CD4-positive, alpha-beta T cell (primary cell): ENCODE measurements at regions of chr7 and their contacts with region 1.

Region 1: DNA sequence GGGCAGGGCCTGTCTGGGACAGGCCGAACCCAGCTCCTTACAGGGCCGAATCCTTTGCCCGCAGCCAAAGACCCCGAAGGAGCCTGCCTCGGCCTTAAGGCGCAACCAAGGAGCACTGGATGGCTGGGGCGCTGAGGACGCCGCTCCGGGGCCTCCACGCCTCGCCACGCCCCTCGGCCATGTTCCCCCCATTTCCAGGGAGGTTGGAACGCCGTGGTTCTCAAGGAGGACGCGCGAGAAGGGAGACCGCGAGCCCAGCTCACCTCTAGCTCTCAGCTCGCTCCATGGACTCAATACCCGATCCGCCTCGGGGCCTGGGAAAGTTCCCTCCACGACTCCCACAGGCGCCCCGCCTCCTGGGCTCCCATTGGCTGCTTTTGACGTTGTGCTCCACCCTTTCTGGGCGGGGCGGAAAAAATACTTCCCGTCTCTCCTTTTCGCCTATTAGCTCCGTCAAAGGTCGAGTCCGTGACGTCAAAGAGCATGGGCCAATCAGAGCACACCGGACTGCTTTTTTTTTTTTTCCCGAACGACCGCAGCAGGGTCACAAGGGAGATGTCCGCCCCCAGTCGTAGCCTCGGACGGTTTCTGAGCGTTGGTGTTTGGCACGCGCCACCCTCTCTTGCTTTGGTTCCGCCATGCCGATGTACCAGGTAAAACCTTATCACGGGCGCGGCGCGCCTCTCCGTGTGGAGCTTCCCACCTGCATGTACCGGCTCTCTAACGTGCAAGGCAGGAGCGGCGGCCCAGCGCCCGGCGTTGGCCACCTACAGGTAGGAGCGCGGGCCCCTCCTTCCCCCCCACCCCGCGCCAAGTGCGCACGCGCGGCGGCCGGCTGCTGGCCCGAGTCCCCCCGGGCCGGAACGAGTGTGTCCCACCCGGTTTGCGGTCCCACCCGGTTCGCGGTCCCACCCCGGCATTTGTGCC is 305.7 kb downstream of the TYW1 start:
- DNase-seq: peak; percentile 90 to 99 (median 96)
- ATAC-seq: peak; percentile 82
- H3K4me3 ChIP-seq: peak overlapping the region; percentile 70
- H3K4me3 Mint-ChIP-seq: peak overlapping the region; percentile 96
- H3K27ac ChIP-seq: peak overlapping the region; percentile 68 to 89
- H3K27ac Mint-ChIP-seq: peak overlapping the region; percentile 99
- H3K4me1 ChIP-seq: peaks cover 24% of the 10 kb centered on the region
- H3K4me1 Mint-ChIP-seq: peaks cover 23% of the 10 kb centered on the region
- H3K27me3 ChIP-seq: no peaks in the 10 kb centered on the region
- H3K27me3 Mint-ChIP-seq: no peaks in the 10 kb centered on the region
- CTCF ChIP-seq: no peak

Region 2: DNA sequence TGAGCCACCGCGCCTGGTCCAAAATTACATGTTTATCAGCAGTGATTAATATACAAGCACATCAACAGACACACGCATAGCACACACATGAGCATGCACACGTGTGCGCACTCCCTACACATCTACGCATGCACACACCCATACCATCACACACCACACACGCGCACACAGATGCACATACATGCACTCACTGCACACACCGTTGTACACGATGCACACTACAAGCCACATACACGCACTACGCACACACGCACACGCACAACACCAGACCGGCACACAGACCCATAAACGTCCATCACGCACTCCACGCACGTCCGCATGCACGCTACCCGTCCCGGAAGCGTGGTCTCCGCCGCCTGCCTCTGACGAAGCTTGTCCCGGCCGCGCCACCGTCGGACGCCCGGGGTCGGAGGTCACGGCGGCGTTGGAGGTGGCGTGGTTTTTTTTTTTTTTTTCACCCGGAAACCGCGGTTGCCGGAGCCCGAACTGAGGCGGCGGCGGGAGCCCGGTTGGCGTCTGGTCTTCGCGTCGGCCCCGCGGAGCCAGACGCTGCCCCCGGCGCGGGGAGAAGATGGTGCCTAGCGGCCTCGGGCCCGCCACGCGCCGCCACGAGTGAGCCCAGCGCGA is 381.5 kb before region 1 on chr7 and contains the start of gene TMEM248:
- CTCF ChIA-PET with region 1: no interaction called
- POLR2A ChIA-PET with region 1: no interaction called
- intact Hi-C with region 1: loop called in 1 of 2 experiments (anchors 10 kb)
- DNase-seq: peak; percentile 85 to 96 (median 91)
- ATAC-seq: peak; percentile 86
- H3K4me3 ChIP-seq: peak within 1 kb of the TSS; percentile 95
- H3K4me3 Mint-ChIP-seq: peak within 1 kb of the TSS; percentile 100
- H3K27ac ChIP-seq: peak within 1 kb of the TSS; percentile 76 to 90
- H3K27ac Mint-ChIP-seq: peak within 1 kb of the TSS; percentile 99
- H3K4me1 ChIP-seq: peaks cover 42% of the 10 kb centered on the region
- H3K4me1 Mint-ChIP-seq: peaks cover 43% of the 10 kb centered on the region
- H3K27me3 ChIP-seq: no peaks in the 10 kb centered on the region
- H3K27me3 Mint-ChIP-seq: no peaks in the 10 kb centered on the region
- CTCF ChIP-seq: no peak
- total RNA-seq, gene TMEM248: 64.7 to 67.4 TPM

Region 3: DNA sequence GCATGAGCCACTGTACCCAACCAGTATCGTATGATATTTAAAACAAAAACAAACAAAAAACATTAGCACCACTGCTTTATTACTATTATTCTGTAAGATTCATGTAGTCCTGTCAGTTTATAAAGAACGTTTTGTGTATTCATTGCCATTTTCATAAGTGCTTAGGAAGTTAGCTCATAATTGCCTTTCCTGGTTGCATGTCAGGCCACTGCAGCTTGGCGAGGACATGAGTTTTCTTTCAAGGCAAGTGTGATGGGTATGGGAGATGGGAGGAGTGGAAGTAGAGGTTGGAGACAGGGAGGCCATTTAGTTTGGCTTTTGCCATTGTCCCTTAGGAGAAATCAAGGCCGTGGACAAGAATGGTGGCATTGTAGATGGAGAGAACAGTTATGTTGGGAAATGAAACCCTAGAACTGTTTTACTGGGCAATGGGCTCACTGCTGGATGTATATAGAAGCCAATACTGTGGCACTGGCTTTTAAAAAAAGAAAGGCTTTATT is 256.8 kb before region 1 on chr7:
- CTCF ChIA-PET with region 1: no interaction called
- POLR2A ChIA-PET with region 1: interaction called, 3 read pairs
- intact Hi-C with region 1: loop called in 1 of 2 experiments (anchors 5 kb)
- DNase-seq: no peak
- ATAC-seq: no peak
- H3K4me3 ChIP-seq: no peak overlapping the region
- H3K4me3 Mint-ChIP-seq: no peak overlapping the region
- H3K27ac ChIP-seq: no peak overlapping the region
- H3K27ac Mint-ChIP-seq: no peak overlapping the region
- H3K4me1 ChIP-seq: no peaks in the 10 kb centered on the region
- H3K4me1 Mint-ChIP-seq: peaks cover 13% of the 10 kb centered on the region
- H3K27me3 ChIP-seq: no peaks in the 10 kb centered on the region
- H3K27me3 Mint-ChIP-seq: no peaks in the 10 kb centered on the region
- CTCF ChIP-seq: no peak

Region 4: DNA sequence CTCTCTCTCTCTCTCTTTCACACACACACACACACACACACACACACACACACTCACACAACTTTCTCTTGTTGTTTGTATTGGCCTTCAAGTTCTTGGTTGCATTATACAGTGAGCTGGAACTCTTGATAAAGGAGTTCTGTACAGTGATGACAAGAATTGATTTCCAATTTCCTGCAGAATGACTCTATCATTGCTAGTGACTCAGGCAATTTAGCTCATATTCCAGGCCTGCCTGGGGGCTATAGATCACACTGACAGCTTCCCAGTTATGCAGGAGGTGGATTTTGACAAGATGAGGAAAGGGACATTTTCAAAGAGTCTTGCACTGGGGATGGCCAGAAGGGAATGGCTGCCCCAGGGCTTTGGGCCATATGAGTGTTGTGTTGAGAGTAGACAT is 203.1 kb after region 1 on chr7:
- CTCF ChIA-PET with region 1: no interaction called
- POLR2A ChIA-PET with region 1: no interaction called
- intact Hi-C with region 1: no loop called
- DNase-seq: no peak
- ATAC-seq: no peak
- H3K4me3 ChIP-seq: no peak overlapping the region
- H3K4me3 Mint-ChIP-seq: no peak overlapping the region
- H3K27ac ChIP-seq: no peak overlapping the region
- H3K27ac Mint-ChIP-seq: no peak overlapping the region
- H3K4me1 ChIP-seq: no peaks in the 10 kb centered on the region
- H3K4me1 Mint-ChIP-seq: no peaks in the 10 kb centered on the region
- H3K27me3 ChIP-seq: no peaks in the 10 kb centered on the region
- H3K27me3 Mint-ChIP-seq: no peaks in the 10 kb centered on the region
- CTCF ChIP-seq: no peak